AG04449 (cell line): ENCODE measurements at regions of chr1 and their contacts with region 1.

Region 1: GRCh38 chr1:110605901-110606656 is at the start of gene KCNA2:
- DNase-seq: no peak
- H3K4me3 ChIP-seq: peak within 1 kb of the TSS; percentile 23
- CTCF ChIP-seq: no peak

Region 2: GRCh38 chr1:110619412-110620249 is 13.6 kb after region 1 on chr1:
- CTCF ChIA-PET with region 1: interaction called, 16 read pairs
- POLR2A ChIA-PET with region 1: no interaction called
- DNase-seq: no peak
- H3K4me3 ChIP-seq: no peak overlapping the region
- CTCF ChIP-seq: peak; percentile 92

Region 3: DNA sequence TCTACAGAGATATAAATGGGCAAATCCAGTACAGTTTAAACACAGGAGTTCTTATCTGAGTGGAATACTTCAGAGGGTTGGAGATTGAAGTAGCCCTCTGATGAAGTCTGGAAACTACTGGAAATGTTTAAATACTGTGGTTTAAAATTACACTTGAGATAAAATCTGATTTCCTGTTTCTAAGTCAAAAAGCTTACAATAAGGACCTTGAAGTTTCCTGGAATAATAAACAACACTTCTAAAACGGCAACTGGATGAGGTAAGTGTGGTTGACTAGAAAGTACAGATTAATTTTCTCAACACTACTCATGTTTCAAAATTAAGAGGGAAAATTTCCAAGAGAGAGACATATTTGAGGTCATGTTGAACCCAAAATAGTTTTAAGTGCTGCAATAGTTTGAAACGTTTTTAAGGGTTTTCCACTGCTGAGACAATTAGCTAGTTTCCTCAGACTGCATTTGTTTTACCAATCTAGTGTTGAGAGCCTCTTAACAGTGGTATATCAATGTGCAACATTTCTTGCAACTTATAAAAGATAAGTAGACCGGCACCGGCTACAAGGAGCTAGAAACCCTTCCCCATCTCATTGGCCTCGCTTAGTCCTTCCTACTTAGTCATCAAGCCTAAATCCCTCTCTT is 41.3 kb after region 1 on chr1:
- CTCF ChIA-PET with region 1: no interaction called
- POLR2A ChIA-PET with region 1: no interaction called
- DNase-seq: no peak
- H3K4me3 ChIP-seq: no peak overlapping the region
- CTCF ChIP-seq: no peak